ENCODE measurements at regions of chr20 and their contacts with region 1.

Region 1: GRCh38 chr20:54624706-54625390 is 149.5 kb downstream of the DOK5 start:
- DNase-seq: no peak
- ATAC-seq: no peak
- H3K4me3 ChIP-seq: no peak overlapping the region
- H3K27ac ChIP-seq: no peak overlapping the region
- H3K4me1 ChIP-seq: peaks cover 7 to 26% of the 10 kb centered on the region in 2 donors
- H3K27me3 ChIP-seq: no peaks in the 10 kb centered on the region
- CTCF ChIP-seq: no peak
- POLR2A ChIP-seq: no peak

Region 2: DNA sequence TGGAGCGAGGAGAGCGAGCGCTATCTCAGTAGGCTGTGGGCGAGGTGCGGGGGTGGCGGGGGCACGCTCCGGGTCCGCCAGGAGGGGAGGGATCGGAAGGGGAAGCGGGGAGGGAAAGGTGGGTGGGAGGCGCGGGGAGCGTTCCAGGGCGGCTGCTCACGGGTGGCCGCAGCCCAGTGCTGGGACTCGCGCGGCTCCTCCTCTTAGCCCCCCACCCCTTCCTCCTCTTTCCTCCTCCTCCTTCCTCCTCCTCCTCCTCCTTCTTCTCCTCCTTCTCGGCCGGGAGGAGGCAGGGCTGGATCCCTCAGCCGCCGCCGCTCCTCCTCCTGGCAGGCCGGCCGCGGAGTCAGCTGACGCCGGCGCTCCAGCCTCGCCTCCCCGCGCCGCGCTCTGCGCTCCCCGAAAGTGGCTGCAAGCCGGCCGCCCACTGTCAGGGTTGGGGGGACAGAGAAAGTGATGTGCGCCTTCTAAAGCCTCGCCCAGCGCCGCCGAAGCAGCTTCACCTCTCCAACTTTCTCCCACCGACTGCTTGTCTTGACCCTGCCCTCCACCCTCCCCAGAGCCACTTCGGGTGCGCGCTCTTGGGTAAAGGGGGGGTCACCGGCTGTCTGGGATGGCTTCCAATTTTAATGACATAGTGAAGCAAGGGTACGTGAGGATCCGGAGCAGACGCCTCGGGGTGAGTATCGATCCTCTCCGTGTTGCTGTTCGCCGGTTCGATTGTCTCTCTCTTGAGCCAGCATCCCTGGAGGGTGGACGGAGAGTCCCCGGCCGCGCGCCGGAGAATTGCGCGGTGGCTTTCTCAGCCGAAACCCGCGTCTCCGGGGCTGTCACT is 149.3 kb before region 1 on chr20 and contains the start of gene DOK5:
- in situ Hi-C with region 1: loop called in 2 of 4 experiments (anchors 25 kb)
- intact Hi-C with region 1: loop called (anchors 10 kb)
- DNase-seq: peak; percentile 15 to 21
- ATAC-seq: peak; percentile 63 to 67
- H3K4me3 ChIP-seq: peak within 1 kb of the TSS; percentile 72 to 85 (median 80)
- H3K27ac ChIP-seq: peak within 1 kb of the TSS; percentile 66 to 80 (median 68)
- H3K4me1 ChIP-seq: peaks cover 9 to 11% of the 10 kb centered on the region in 2 donors
- H3K27me3 ChIP-seq: no peaks in the 10 kb centered on the region
- CTCF ChIP-seq: no peak
- POLR2A ChIP-seq: no peak
- total RNA-seq, gene DOK5: 1.2 to 12.7 (median 7.4) TPM

Measured in gastrocnemius medialis (tissue), 4 donors.